OCI-LY7 (cell line): ENCODE measurements at regions of chr7 and their contacts with region 1.

Region 1: GRCh38 chr7:100852048-100852872 is at the start of gene SLC12A9:
- DNase-seq: peak; percentile 90
- H3K4me3 ChIP-seq: peak within 1 kb of the TSS; percentile 85
- H3K27ac ChIP-seq: peak within 1 kb of the TSS; percentile 45
- H3K4me1 ChIP-seq: peaks cover 15% of the 10 kb centered on the region
- CTCF ChIP-seq: peak; percentile 95
- total RNA-seq, gene SLC12A9: 15.7 and 17.0 TPM in 2 replicates

Region 2: DNA sequence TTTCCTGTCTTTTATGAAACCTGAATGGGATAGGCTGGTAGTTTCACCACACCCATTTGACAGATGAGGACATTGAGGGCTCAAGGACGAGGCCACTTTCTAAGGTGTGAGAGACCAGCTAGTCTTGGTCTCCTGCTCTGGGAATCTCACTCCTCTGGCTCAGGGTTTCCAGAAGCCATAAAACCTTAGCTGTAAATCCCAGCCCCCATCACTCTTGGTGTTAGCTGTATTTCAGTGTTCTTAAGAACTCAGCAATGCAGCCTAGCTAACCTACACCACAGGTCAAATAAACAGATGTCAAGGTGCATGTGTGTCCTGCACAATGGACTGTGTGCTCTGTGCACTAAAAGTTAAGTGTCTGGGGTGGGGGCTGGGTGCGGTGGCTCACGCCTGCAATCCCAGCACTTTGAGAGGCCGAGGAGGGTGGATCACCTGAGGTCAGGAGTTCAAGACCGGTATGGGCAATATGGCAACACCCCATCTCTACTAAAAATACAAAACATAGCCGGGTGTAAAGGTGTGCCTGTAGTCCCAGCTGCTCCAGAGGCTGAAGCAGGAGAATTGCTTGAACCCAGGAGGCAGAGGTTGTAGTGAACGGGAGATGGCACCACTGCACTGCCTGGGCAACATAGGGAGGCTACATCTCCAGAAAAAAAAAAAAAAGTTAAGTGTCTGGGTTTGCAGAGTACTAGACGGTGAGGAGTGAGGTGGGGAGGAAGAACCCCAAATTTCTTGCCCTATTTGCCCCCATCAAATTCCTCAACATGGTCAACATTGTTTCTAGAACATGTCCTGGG is 132.5 kb before region 1 on chr7:
- CTCF ChIA-PET with region 1: no interaction called
- POLR2A ChIA-PET with region 1: no interaction called
- intact Hi-C with region 1: loop called (anchors 5 kb)
- DNase-seq: no peak
- H3K4me3 ChIP-seq: no peak overlapping the region
- H3K27ac ChIP-seq: no peak overlapping the region
- H3K4me1 ChIP-seq: no peaks in the 10 kb centered on the region
- CTCF ChIP-seq: no peak

Region 3: GRCh38 chr7:100799014-100799896 is 53.0 kb before region 1 on chr7:
- CTCF ChIA-PET with region 1: interaction called, 5 read pairs
- POLR2A ChIA-PET with region 1: no interaction called
- intact Hi-C with region 1: loop called (anchors 1 kb)
- DNase-seq: peak; percentile 48
- H3K4me3 ChIP-seq: no peak overlapping the region
- H3K27ac ChIP-seq: no peak overlapping the region
- H3K4me1 ChIP-seq: peaks cover 10% of the 10 kb centered on the region
- CTCF ChIP-seq: peak; percentile 80

Region 4: GRCh38 chr7:100921039-100921438 is 68.8 kb after region 1 on chr7:
- CTCF ChIA-PET with region 1: no interaction called
- POLR2A ChIA-PET with region 1: no interaction called
- intact Hi-C with region 1: no loop called
- DNase-seq: no peak
- H3K4me3 ChIP-seq: no peak overlapping the region
- H3K27ac ChIP-seq: no peak overlapping the region
- H3K4me1 ChIP-seq: no peaks in the 10 kb centered on the region
- CTCF ChIP-seq: no peak

Region 5: GRCh38 chr7:101126651-101127280 is 274.5 kb after region 1 on chr7 and contains the start of gene SERPINE1:
- CTCF ChIA-PET with region 1: no interaction called
- POLR2A ChIA-PET with region 1: no interaction called
- intact Hi-C with region 1: no loop called
- DNase-seq: peak; percentile 76
- H3K4me3 ChIP-seq: peak within 1 kb of the TSS; percentile 7
- H3K27ac ChIP-seq: no peak within 1 kb of the TSS
- H3K4me1 ChIP-seq: peaks cover 23% of the 10 kb centered on the region
- CTCF ChIP-seq: peak; percentile 55
- total RNA-seq, gene SERPINE1: not detected in 2 replicates